ENCODE measurements at regions of chr10 and their contacts with region 1.

Region 1: GRCh38 chr10:103204353-103205255 is 11.5 kb upstream of the NT5C2 start:
- DNase-seq: peak; percentile 64
- ATAC-seq: peak; percentile 79
- H3K4me3 ChIP-seq: no peak overlapping the region
- H3K27ac ChIP-seq: peak overlapping the region; percentile 69
- H3K4me1 ChIP-seq: peaks cover 7% of the 10 kb centered on the region; the same call in 1 of the 2 replicates
- H3K27me3 ChIP-seq: no peaks in the 10 kb centered on the region
- CTCF ChIP-seq: no peak
- POLR2A ChIP-seq: no peak
- RAD21 ChIP-seq: no peak

Region 2: GRCh38 chr10:103181244-103181643 is 23.4 kb before region 1 on chr10:
- CTCF ChIA-PET with region 1: no interaction called
- POLR2A ChIA-PET with region 1: no interaction called
- dilution Hi-C with region 1: no loop called
- in situ Hi-C with region 1: no loop called
- intact Hi-C with region 1: no loop called
- DNase-seq: no peak
- ATAC-seq: no peak
- H3K4me3 ChIP-seq: no peak overlapping the region
- H3K27ac ChIP-seq: no peak overlapping the region
- H3K4me1 ChIP-seq: peaks cover 10% of the 10 kb centered on the region
- H3K27me3 ChIP-seq: no peaks in the 10 kb centered on the region
- CTCF ChIP-seq: no peak
- POLR2A ChIP-seq: no peak
- RAD21 ChIP-seq: no peak

Region 3: DNA sequence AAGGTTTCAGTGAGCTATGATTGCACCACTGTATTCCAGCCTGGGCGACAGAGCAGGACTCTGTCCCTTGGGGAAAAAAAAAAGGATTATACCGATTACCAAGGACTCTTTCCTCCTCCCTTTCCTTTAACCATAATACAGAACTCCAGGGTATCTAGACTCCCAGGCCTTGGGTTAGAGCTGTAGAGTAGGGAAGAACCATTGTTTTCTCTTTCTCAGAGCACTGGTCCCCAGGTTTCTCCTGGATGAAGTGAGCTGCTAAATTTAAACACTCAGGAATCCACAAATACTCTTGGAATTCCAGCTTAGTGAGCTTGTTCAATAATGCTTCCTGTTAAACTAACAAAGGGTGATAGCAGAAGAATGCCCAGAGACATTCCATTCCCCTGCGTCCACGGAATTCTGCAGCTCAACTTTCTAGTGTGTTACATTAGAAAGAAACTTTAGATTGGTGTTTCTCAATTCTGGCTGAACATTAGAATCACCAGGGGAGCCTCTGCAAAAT is 26.5 kb after region 1 on chr10:
- CTCF ChIA-PET with region 1: interaction called, 4 read pairs
- POLR2A ChIA-PET with region 1: interaction called, 16 read pairs
- dilution Hi-C with region 1: no loop called
- in situ Hi-C with region 1: no loop called
- intact Hi-C with region 1: no loop called
- DNase-seq: peak; percentile 97
- ATAC-seq: peak; percentile 83
- H3K4me3 ChIP-seq: no peak overlapping the region
- H3K27ac ChIP-seq: peak overlapping the region; percentile 93
- H3K4me1 ChIP-seq: peaks cover 19% of the 10 kb centered on the region
- H3K27me3 ChIP-seq: no peaks in the 10 kb centered on the region
- CTCF ChIP-seq: no peak
- POLR2A ChIP-seq: no peak
- RAD21 ChIP-seq: 0 out of 2 replicates have a peak, but pooled peaks have one; percentile 11

Measured in IMR-90 (cell line).